IMR-90 (cell line): ENCODE measurements at regions of chr5 and their contacts with region 1.

Region 1: DNA sequence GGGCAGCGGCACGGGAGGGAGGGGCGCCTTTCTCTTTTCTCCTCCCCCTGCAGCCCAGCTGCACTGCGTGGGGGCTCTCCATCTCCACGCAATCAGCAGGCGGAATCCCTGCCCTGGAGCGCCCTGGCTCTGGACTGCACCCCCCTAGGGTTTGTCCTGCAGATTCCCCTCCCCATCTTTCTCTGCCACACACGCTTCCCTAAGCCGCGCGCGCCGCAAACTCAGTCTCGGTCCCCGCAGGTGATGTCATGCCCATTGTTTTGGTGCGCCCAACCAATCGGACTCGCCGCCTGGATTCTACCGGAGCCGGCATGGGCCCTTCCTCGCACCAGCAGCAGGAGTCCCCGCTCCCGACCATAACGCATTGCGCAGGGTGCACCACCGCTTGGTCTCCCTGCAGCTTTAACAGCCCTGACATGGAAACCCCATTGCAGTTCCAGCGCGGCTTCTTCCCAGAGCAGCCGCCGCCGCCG is at the start of gene KCNN2:
- DNase-seq: peak; percentile 92
- ATAC-seq: peak; percentile 87
- H3K4me3 ChIP-seq: peak within 1 kb of the TSS; percentile 76
- H3K27ac ChIP-seq: no peak within 1 kb of the TSS
- H3K4me1 ChIP-seq: no peaks in the 10 kb centered on the region
- H3K27me3 ChIP-seq: peaks cover 7% of the 10 kb centered on the region
- CTCF ChIP-seq: no peak
- POLR2A ChIP-seq: 0 out of 2 replicates have a peak, but pooled peaks have one; percentile 22
- RAD21 ChIP-seq: no peak
- total RNA-seq, gene KCNN2: 2.2 and 3.3 TPM in 2 replicates

Region 2: DNA sequence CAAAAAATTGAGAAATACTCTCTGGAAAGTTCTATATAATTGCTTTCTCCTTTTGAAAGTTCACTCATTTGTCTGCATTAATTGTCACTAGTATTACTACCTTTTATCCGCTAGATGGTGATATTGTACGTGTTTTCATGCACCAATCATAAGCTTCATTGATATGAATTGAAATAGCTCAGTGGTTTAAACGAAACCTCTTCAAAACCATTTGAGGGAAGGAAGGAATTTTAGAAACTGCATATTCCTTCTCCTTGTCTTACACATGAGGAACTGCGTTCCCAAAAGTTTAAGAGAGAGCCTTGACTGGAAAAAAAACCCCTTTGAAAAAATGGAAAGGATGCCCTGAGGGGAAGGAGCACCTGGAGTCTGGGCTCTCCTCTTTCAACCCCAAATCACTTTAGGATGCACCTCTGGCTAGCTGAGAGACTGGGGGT is 749.7 kb before region 1 on chr5:
- CTCF ChIA-PET with region 1: no interaction called
- POLR2A ChIA-PET with region 1: no interaction called
- dilution Hi-C with region 1: no loop called
- in situ Hi-C with region 1: no loop called
- intact Hi-C with region 1: loop called (anchors 1 kb)
- DNase-seq: peak; percentile 51
- ATAC-seq: peak; percentile 61
- H3K4me3 ChIP-seq: no peak overlapping the region
- H3K27ac ChIP-seq: no peak overlapping the region
- H3K4me1 ChIP-seq: peaks cover 9% of the 10 kb centered on the region
- H3K27me3 ChIP-seq: no peaks in the 10 kb centered on the region
- CTCF ChIP-seq: peak; percentile 67
- POLR2A ChIP-seq: no peak
- RAD21 ChIP-seq: peak; percentile 69

Region 3: GRCh38 chr5:113806250-113806649 is 555.5 kb before region 1 on chr5:
- CTCF ChIA-PET with region 1: no interaction called
- POLR2A ChIA-PET with region 1: no interaction called
- dilution Hi-C with region 1: no loop called
- in situ Hi-C with region 1: no loop called
- intact Hi-C with region 1: loop called (anchors 2 kb)
- DNase-seq: peak; percentile 34
- ATAC-seq: peak; percentile 68
- H3K4me3 ChIP-seq: peak overlapping the region; percentile 22; the same call in 1 of the 2 replicates
- H3K27ac ChIP-seq: no peak overlapping the region
- H3K4me1 ChIP-seq: no peaks in the 10 kb centered on the region; the same call in 1 of the 2 replicates
- H3K27me3 ChIP-seq: no peaks in the 10 kb centered on the region
- CTCF ChIP-seq: peak; percentile 54
- POLR2A ChIP-seq: no peak
- RAD21 ChIP-seq: peak; percentile 44

Region 4: DNA sequence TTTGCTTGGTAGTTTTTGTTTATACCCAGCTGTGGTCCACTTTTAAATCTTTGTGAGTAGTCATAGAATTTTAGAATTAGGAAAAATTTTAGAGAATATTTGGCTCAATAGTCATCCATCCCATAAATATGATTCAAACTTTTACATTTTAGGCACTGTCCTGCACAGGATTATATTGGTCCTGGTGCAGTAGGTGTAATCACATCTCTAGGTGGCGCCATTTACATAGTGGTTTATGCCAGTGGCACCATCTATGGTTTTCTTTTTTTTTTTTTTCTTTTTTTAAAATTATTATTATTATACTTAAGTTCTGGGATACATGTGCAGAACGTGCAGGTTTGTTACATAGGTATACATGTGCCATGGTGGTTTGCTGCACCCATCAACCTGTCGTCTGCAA is 260.6 kb before region 1 on chr5:
- CTCF ChIA-PET with region 1: interaction called, 4 read pairs
- POLR2A ChIA-PET with region 1: no interaction called
- dilution Hi-C with region 1: no loop called
- in situ Hi-C with region 1: no loop called
- intact Hi-C with region 1: loop called (anchors 1 kb)
- DNase-seq: peak; percentile 80
- ATAC-seq: peak; percentile 91
- H3K4me3 ChIP-seq: no peak overlapping the region
- H3K27ac ChIP-seq: no peak overlapping the region
- H3K4me1 ChIP-seq: no peaks in the 10 kb centered on the region
- H3K27me3 ChIP-seq: no peaks in the 10 kb centered on the region
- CTCF ChIP-seq: peak; percentile 82
- POLR2A ChIP-seq: no peak
- RAD21 ChIP-seq: peak; percentile 85

Region 5: GRCh38 chr5:115069087-115069968 is 707.6 kb after region 1 on chr5:
- CTCF ChIA-PET with region 1: no interaction called
- POLR2A ChIA-PET with region 1: no interaction called
- dilution Hi-C with region 1: no loop called
- in situ Hi-C with region 1: no loop called
- intact Hi-C with region 1: loop called (anchors 10 kb)
- DNase-seq: peak; percentile 58
- ATAC-seq: peak; percentile 90
- H3K4me3 ChIP-seq: no peak overlapping the region
- H3K27ac ChIP-seq: no peak overlapping the region
- H3K4me1 ChIP-seq: no peaks in the 10 kb centered on the region
- H3K27me3 ChIP-seq: no peaks in the 10 kb centered on the region
- CTCF ChIP-seq: peak; percentile 62
- POLR2A ChIP-seq: no peak
- RAD21 ChIP-seq: peak; percentile 70